ENCODE measurements at regions of chr19 and their contacts with region 1.

Region 1: DNA sequence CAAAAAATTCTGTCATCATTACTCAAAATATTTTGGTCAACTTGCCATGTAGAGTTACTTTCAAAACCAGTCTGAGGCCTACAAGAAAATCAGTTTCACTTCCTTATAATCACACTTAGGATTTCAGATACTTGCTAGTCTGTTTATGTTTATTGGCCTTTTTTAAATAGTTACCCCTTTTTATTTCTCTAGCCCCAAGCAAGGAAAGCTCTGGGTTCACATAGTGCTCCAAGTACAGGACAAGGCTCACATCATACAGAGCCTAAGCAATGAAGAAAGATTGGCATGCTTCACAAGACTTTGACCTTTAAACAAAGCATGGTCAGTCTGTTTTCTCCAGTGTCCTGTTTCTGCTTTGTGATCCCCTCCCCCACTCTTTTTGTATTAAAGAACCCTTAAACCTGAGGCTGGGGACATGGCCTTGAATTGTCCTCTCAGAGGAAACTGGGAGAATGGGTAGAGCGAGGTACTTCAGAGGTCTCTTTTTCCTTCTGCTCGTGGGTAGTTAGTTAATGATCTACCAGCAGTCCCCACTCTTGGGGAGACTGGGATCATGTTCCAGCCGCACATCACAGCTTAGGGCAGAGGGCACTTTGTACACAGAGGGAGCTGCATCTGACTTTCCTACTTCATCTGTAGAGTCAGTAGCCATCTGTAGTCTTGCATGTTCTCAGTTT is 30.7 kb downstream of the CEACAM1 start:
- DNase-seq: no peak
- ATAC-seq: no peak
- H3K4me3 ChIP-seq: no peak overlapping the region
- H3K27ac ChIP-seq: no peak overlapping the region
- H3K4me1 ChIP-seq: no peaks in the 10 kb centered on the region
- H3K27me3 ChIP-seq: no peaks in the 10 kb centered on the region
- CTCF ChIP-seq: no peak

Region 2: GRCh38 chr19:42370626-42371170 is 126.9 kb before region 1 on chr19:
- CTCF ChIA-PET with region 1: interaction called, 11 read pairs
- POLR2A ChIA-PET with region 1: no interaction called
- in situ Hi-C with region 1: no loop called
- intact Hi-C with region 1: no loop called
- DNase-seq: no peak
- ATAC-seq: no peak
- H3K4me3 ChIP-seq: no peak overlapping the region
- H3K27ac ChIP-seq: no peak overlapping the region
- H3K4me1 ChIP-seq: no peaks in the 10 kb centered on the region
- H3K27me3 ChIP-seq: no peaks in the 10 kb centered on the region
- CTCF ChIP-seq: no peak

Measured in Panc1 (cell line).